Breast epithelium (tissue), 4 donors: ENCODE measurements at regions of chr11 and their contacts with region 1.

Region 1: GRCh38 chr11:113675003-113675561 is 31.0 kb downstream of the TMPRSS5 start:
- DNase-seq: no peak
- H3K4me3 ChIP-seq: no peak overlapping the region
- H3K27ac ChIP-seq: peak overlapping the region in 1 of 2 donors; percentile 7
- H3K4me1 ChIP-seq: no peaks in the 10 kb centered on the region
- H3K27me3 ChIP-seq: no peaks in the 10 kb centered on the region
- CTCF ChIP-seq: no peak
- POLR2A ChIP-seq: no peak

Region 2: DNA sequence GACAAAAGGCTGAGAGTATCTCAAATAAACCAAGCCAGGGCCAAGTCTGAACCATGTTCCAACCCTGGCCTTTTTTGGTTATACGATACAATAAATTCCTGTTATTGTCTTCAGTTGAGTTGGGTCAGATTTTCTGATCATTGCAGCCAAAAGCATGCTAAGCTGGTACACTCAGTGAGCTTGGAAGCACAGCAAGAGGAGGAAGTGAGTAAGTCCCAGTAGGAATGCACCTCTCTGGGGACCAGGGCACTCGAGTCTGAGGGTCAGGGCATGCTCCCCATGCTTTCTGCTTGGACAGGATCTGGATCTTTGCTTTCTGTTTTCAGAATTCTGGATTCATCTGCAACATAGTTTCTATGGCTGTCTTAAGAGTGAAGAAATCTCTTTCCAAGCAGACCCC is 42.1 kb before region 1 on chr11:
- intact Hi-C with region 1: loop called (anchors 1 kb)
- DNase-seq: no peak
- H3K4me3 ChIP-seq: no peak overlapping the region
- H3K27ac ChIP-seq: no peak overlapping the region
- H3K4me1 ChIP-seq: no peaks in the 10 kb centered on the region
- H3K27me3 ChIP-seq: no peaks in the 10 kb centered on the region
- CTCF ChIP-seq: no peak
- POLR2A ChIP-seq: no peak

Region 3: GRCh38 chr11:114892381-114893197 is 1217.5 kb after region 1 on chr11:
- intact Hi-C with region 1: loop called (anchors 5 kb)
- DNase-seq: no peak
- H3K4me3 ChIP-seq: no peak overlapping the region
- H3K27ac ChIP-seq: no peak overlapping the region
- H3K4me1 ChIP-seq: no peaks in the 10 kb centered on the region
- H3K27me3 ChIP-seq: no peaks in the 10 kb centered on the region
- CTCF ChIP-seq: no peak
- POLR2A ChIP-seq: no peak